ENCODE measurements at regions of chr2 and their contacts with region 1.

Region 1: DNA sequence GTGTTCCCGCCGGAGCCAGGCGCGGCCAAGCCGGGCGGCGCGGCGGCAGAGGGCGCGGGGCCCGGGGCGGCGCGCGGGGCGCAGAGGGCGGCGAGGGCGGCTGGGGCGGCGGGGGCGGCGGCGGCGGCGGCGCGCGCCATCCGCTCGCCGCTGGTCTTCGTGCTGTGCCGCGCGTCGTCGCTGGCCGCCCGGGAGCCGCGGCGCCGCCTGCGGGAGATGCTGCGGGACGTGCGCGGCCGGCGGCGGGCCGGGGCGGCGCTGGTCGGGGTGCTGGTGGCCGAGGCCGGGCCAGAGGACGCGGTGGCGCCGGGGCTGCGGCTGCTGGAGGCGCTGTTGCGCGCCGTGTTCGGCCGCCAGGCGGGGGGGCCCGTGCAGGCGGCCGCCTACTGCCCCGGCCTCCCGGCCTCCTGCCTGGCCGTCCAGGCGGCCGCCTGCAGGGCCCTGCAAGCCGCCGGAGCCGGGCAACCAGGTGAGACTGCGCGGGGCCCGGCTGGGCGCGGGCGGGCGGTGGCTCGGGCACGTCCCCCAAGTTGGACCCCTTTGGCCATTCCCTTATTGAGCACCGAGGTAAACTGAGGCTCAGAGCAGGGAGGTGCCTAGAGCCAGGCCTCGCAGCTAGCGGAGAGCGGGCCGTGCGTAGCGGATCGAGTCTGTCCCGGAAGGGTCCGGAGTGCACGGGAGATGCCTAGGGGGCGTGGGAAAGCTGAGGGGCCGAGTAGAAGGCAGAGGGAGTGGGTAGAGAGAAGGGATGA is 584 bp downstream of the C2orf72 start:
- DNase-seq: no peak
- ATAC-seq: peak; percentile 31
- H3K4me3 ChIP-seq: peak overlapping the region; percentile 83 to 99 (median 99)
- H3K27ac ChIP-seq: peak overlapping the region; percentile 92
- H3K4me1 ChIP-seq: peaks cover 86% of the 10 kb centered on the region
- H3K27me3 ChIP-seq: no peaks in the 10 kb centered on the region; a peak in 1 of 5 replicates
- CTCF ChIP-seq: peak; percentile 41
- EP300 ChIP-seq: no peak
- POLR2A ChIP-seq: no peak
- RAD21 ChIP-seq: peak; percentile 85

Region 2: DNA sequence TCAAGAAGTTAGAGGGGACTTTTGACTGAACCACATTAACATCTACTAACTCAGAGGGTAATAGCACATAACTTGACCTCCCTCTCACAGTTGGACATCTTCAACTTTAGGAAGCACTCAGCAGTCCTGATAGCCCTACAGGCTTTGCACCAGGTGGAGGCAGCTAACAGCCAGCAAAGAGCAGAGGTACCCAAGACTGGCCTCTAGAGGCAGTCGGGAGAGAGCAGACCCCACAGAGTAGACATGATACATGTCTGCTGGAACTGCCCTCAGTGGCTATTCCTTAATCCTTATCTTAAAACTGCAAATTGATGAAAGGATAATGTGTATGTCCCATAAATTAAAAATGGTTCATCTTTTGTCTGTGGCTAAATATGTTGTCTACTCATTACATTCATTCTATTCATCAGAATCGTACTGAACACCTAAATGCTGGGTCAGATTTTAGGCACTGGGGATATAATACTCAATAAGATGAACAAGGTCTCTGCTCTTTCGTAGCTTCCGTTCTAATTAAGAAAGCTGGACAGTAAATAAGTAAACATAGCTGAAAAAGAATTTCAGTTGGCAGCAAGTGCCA is 275.5 kb before region 1 on chr2:
- CTCF ChIA-PET with region 1: no interaction called
- POLR2A ChIA-PET with region 1: no interaction called
- in situ Hi-C with region 1: no loop called
- intact Hi-C with region 1: no loop called
- DNase-seq: peak; percentile 65
- ATAC-seq: peak; percentile 100
- H3K4me3 ChIP-seq: no peak overlapping the region
- H3K27ac ChIP-seq: no peak overlapping the region
- H3K4me1 ChIP-seq: no peaks in the 10 kb centered on the region
- H3K27me3 ChIP-seq: no peaks in the 10 kb centered on the region
- CTCF ChIP-seq: peak; percentile 75
- EP300 ChIP-seq: no peak
- POLR2A ChIP-seq: no peak
- RAD21 ChIP-seq: no peak

Region 3: GRCh38 chr2:231017231-231017598 is 20.7 kb before region 1 on chr2:
- CTCF ChIA-PET with region 1: no interaction called
- POLR2A ChIA-PET with region 1: no interaction called
- in situ Hi-C with region 1: no loop called
- intact Hi-C with region 1: loop called (anchors 2 kb)
- DNase-seq: no peak
- ATAC-seq: peak; percentile 49
- H3K4me3 ChIP-seq: no peak overlapping the region
- H3K27ac ChIP-seq: no peak overlapping the region
- H3K4me1 ChIP-seq: peaks cover 13% of the 10 kb centered on the region; the same call in 1 of the 2 replicates
- H3K27me3 ChIP-seq: peaks cover 0 to 27% of the 10 kb centered on the region in 2 experiments; a peak in 4 of 5 replicates
- CTCF ChIP-seq: no peak
- EP300 ChIP-seq: no peak
- POLR2A ChIP-seq: no peak
- RAD21 ChIP-seq: no peak

Measured in HepG2 (cell line).